ENCODE measurements at regions of chr19 and their contacts with region 1.

Region 1: GRCh38 chr19:58326914-58327726 is at the start of gene ZSCAN22:
- DNase-seq: peak; percentile 96
- ATAC-seq: peak; percentile 91
- H3K4me3 Mint-ChIP-seq: no peak within 1 kb of the TSS
- H3K27ac Mint-ChIP-seq: no peak within 1 kb of the TSS
- H3K4me1 Mint-ChIP-seq: peaks cover 4% of the 10 kb centered on the region
- H3K27me3 Mint-ChIP-seq: no peaks in the 10 kb centered on the region
- total RNA-seq, gene ZSCAN22: 3.1 to 3.8 TPM

Region 2: DNA sequence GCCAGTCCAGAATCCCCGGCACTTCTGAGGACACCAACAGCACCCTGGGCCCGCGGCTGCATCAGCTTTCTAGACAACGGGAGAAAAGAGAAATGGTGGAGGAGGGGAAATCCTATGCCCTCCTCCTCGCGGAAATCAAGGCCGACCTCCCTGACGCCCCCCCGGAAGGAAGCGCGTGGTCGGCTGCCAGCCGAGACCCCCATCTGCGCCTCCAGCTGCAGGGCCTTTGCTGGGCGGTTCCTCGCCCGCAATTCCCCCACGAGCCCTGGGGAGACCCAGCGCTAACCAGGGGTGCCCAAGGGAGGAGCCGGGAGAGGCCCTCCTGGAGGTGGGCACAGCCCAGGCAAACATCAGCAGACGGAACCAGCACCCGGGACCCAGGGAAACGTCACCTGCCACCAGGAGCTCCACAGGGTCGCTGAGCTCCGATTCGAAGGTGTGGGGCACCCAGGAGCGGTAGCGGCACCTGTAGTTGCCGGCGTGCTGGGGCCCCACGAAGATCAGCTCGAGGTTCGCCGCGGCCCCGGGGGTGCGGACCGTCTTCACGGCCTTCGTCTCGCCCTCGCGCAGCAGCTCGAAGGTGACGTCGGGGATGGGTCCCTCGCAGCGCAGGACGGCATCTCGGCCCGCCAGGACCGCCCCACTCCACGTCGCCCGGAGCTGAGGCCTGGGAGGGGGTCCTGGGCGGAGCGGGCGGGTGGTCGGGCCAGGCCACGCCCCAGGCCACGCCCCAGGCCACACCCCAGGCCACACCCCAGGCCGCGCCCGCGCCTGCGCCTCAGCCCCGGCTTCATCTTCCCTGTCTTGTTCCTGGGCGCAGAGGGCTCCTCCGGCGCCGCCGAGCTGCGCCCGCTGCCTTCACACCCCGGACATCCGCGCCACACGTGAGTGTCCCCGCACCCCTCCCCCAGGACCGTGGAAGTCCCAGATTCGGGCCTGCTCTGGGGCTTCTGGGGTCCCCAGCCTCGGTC is 20.1 kb after region 1 on chr19:
- CTCF ChIA-PET with region 1: interaction called, 6 read pairs
- POLR2A ChIA-PET with region 1: no interaction called
- intact Hi-C with region 1: loop called in 1 of 2 experiments (anchors 1 kb)
- DNase-seq: peak; percentile 87
- ATAC-seq: peak; percentile 97
- H3K4me3 Mint-ChIP-seq: peak overlapping the region; percentile 87
- H3K27ac Mint-ChIP-seq: peak overlapping the region; percentile 70
- H3K4me1 Mint-ChIP-seq: peaks cover 16% of the 10 kb centered on the region
- H3K27me3 Mint-ChIP-seq: peaks cover 10% of the 10 kb centered on the region

Region 3: GRCh38 chr19:58386576-58387337 is 59.6 kb after region 1 on chr19 and contains the start of gene RPS5:
- CTCF ChIA-PET with region 1: no interaction called
- POLR2A ChIA-PET with region 1: no interaction called
- intact Hi-C with region 1: loop called (anchors 1 kb)
- DNase-seq: peak; percentile 97
- ATAC-seq: peak; percentile 96
- H3K4me3 Mint-ChIP-seq: peak within 1 kb of the TSS; percentile 96
- H3K27ac Mint-ChIP-seq: peak within 1 kb of the TSS; percentile 97
- H3K4me1 Mint-ChIP-seq: peaks cover 33% of the 10 kb centered on the region
- H3K27me3 Mint-ChIP-seq: no peaks in the 10 kb centered on the region
- total RNA-seq, gene RPS5: 1,234 to 1,535 TPM

Region 4: GRCh38 chr19:58408152-58409009 is 81.3 kb after region 1 on chr19 and contains the start of gene ZNF584:
- CTCF ChIA-PET with region 1: no interaction called
- POLR2A ChIA-PET with region 1: no interaction called
- intact Hi-C with region 1: loop called in 1 of 2 experiments (anchors 1 kb)
- DNase-seq: peak; percentile 97
- ATAC-seq: peak; percentile 97
- H3K4me3 Mint-ChIP-seq: peak within 1 kb of the TSS; percentile 84
- H3K27ac Mint-ChIP-seq: peak within 1 kb of the TSS; percentile 92
- H3K4me1 Mint-ChIP-seq: peaks cover 29% of the 10 kb centered on the region
- H3K27me3 Mint-ChIP-seq: no peaks in the 10 kb centered on the region
- total RNA-seq, gene ZNF584: 9.9 to 11.2 TPM

Region 5: DNA sequence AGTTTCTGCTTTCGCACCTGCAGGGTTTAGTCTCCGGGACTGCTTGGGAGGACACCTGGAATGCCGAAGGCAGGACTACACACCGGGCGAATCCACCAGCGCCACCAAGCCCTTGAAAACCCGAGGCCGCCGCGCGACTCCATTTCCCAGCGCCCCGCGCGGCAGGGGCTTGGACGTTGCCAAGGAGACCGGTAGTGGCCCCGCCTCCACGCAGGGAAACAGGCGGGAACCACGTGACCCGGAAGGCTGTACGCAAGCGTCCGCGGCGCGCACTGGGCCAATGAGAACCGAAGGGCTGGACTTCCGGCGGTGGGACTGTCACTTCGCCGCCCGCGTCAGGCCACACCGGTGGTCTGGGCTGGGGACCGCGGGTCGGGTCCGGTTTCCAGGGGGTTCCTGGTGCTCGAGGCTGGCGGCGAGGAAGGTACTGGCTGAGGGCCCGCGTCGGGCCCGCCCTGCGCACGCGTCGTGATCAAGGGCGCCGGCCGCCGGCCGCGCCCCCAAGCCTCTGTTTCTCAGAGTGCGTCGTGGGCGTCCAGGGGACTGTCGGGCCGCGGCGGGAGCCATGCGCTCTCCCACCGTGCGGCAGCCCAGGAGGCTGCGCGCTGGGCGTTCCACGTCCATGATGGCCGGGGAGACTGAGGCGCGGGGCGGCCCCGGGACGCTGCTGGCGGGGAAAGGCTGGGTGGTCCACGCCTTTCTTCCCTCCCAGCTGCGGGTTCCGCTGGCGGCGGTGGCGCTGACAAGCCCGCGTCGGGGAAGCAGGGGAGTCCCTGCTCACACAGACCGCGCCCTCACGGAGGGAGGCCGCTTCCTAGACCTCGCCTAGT is 139.9 kb after region 1 on chr19 and contains the start of gene ZNF324:
- CTCF ChIA-PET with region 1: no interaction called
- POLR2A ChIA-PET with region 1: no interaction called
- intact Hi-C with region 1: loop called in 1 of 2 experiments (anchors 1 kb)
- DNase-seq: peak; percentile 99
- ATAC-seq: peak; percentile 98
- H3K4me3 Mint-ChIP-seq: peak within 1 kb of the TSS; percentile 86
- H3K27ac Mint-ChIP-seq: peak within 1 kb of the TSS; percentile 47
- H3K4me1 Mint-ChIP-seq: peaks cover 22% of the 10 kb centered on the region
- H3K27me3 Mint-ChIP-seq: peaks cover 2% of the 10 kb centered on the region
- total RNA-seq, gene ZNF324: 4.7 to 7.5 TPM

Region 6: GRCh38 chr19:58572818-58573657 is 245.9 kb after region 1 on chr19 and contains the start of gene MZF1:
- CTCF ChIA-PET with region 1: no interaction called
- POLR2A ChIA-PET with region 1: no interaction called
- intact Hi-C with region 1: loop called in 1 of 2 experiments (anchors 1 kb)
- DNase-seq: peak; percentile 100
- ATAC-seq: peak; percentile 69
- H3K4me3 Mint-ChIP-seq: peak within 1 kb of the TSS; percentile 95
- H3K27ac Mint-ChIP-seq: peak within 1 kb of the TSS; percentile 100
- H3K4me1 Mint-ChIP-seq: peaks cover 38% of the 10 kb centered on the region
- H3K27me3 Mint-ChIP-seq: no peaks in the 10 kb centered on the region
- total RNA-seq, gene MZF1: 14.3 to 15.0 TPM

Measured in activated CD4-positive, alpha-beta T cell treated with anti-CD3 and anti-CD28 coated beads for 36 hours (primary cell).